PC-9 (cell line): ENCODE measurements at regions of chr1 and their contacts with region 1.

Region 1: GRCh38 chr1:68346188-68346808 is 103.5 kb downstream of the RPE65 start:
- DNase-seq: no peak
- H3K4me3 ChIP-seq: no peak overlapping the region
- H3K27ac ChIP-seq: no peak overlapping the region
- H3K4me1 ChIP-seq: no peaks in the 10 kb centered on the region
- H3K27me3 ChIP-seq: no peaks in the 10 kb centered on the region
- CTCF ChIP-seq: peak; percentile 78

Region 2: DNA sequence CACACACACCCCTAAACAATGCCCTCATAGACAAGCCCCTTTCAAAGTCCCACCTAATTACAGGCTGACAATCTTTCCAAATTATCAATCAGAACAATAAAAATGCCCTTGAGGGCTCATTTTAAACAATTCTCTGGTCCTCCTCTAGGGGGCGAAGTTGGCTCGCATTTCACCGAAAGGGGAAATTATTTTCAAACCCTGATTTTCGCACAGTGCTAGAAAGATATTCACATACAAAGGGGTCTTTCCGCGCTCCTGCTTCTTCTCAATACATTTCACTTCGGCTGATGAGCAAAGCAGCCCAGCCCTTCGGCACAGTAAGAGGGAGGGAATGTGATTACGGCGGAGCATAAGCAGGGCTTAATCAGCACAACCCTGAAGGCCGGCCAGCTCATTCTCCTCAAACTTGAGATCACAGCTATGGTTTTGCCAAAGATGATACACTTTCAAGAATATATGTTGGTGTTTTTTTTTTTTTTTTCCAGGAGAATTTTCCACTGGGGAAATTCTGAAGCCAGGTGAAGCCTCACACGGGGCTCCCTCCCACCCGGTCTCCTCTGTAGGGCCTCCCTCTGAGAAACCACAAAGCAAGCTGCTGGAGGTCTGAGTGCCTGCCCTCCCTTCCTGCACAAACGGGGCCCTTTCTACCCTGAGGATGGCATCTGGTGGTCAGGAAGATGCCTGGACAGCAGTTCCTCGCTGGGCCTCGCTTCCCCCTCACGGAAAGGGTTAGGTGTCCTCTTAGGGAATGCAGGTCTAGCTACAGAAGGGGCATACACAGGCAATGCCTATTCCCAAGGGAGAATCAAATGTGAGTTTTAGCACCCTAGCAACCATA is 579.9 kb before region 1 on chr1:
- CTCF ChIA-PET with region 1: no interaction called
- POLR2A ChIA-PET with region 1: no interaction called
- intact Hi-C with region 1: loop called (anchors 1 kb)
- DNase-seq: peak in 1 of 2 experiments; percentile 44
- H3K4me3 ChIP-seq: no peak overlapping the region
- H3K27ac ChIP-seq: no peak overlapping the region
- H3K4me1 ChIP-seq: no peaks in the 10 kb centered on the region
- H3K27me3 ChIP-seq: no peaks in the 10 kb centered on the region
- CTCF ChIP-seq: peak; percentile 99

Region 3: GRCh38 chr1:68010090-68010489 is 336.2 kb before region 1 on chr1:
- CTCF ChIA-PET with region 1: no interaction called
- POLR2A ChIA-PET with region 1: no interaction called
- intact Hi-C with region 1: loop called (anchors 10 kb)
- DNase-seq: no peak
- H3K4me3 ChIP-seq: no peak overlapping the region
- H3K27ac ChIP-seq: no peak overlapping the region
- H3K4me1 ChIP-seq: no peaks in the 10 kb centered on the region
- H3K27me3 ChIP-seq: peaks cover 6% of the 10 kb centered on the region; the same call in 1 of the 2 replicates
- CTCF ChIP-seq: peak; percentile 60

Region 4: GRCh38 chr1:68232354-68233148 is 113.7 kb before region 1 on chr1 and contains the start of gene WLS:
- CTCF ChIA-PET with region 1: no interaction called
- POLR2A ChIA-PET with region 1: no interaction called
- intact Hi-C with region 1: loop called (anchors 10 kb)
- DNase-seq: peak in 1 of 2 experiments; percentile 59
- H3K4me3 ChIP-seq: peak within 1 kb of the TSS; percentile 61
- H3K27ac ChIP-seq: no peak within 1 kb of the TSS
- H3K4me1 ChIP-seq: peaks cover 6% of the 10 kb centered on the region; the same call in 1 of the 2 replicates
- H3K27me3 ChIP-seq: peaks cover 4% of the 10 kb centered on the region
- CTCF ChIP-seq: no peak; the same call in 1 of the 2 replicates
- total RNA-seq, gene WLS: 19.8 and 30.5 TPM in 2 replicates

Region 5: DNA sequence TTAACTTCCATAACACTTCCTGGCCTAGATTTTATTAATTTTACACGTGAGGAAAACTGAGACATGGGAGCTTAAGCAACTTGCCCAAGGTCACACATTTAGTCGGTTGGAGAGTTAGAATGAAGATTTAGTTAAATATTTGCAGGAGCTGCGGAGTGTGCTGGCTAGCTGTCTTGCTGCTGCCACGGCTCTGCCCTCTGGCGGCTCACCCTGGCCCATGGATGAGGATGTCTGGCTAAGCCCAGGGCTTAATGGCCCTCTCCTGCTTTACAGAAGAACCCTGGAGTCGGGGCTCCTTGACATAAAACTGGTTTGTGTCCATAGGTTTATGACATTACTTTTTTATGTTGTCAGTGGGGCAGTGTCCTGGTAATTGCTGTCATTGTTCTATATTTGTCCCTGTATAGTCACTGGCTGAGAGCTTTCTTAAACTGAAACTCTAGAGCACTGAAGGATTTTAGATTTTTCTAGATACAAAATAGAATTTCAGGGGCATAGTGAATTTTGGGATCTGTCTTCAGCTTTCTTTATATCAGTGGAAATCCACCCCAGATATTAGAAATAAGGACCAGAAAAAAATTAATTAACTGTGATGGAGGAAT is 25.1 kb before region 1 on chr1:
- CTCF ChIA-PET with region 1: no interaction called
- POLR2A ChIA-PET with region 1: no interaction called
- intact Hi-C with region 1: no loop called
- DNase-seq: peak in 1 of 2 experiments; percentile 11
- H3K4me3 ChIP-seq: no peak overlapping the region
- H3K27ac ChIP-seq: no peak overlapping the region
- H3K4me1 ChIP-seq: no peaks in the 10 kb centered on the region
- H3K27me3 ChIP-seq: no peaks in the 10 kb centered on the region
- CTCF ChIP-seq: no peak

Region 6: GRCh38 chr1:68363339-68363738 is 17.0 kb after region 1 on chr1:
- CTCF ChIA-PET with region 1: no interaction called
- POLR2A ChIA-PET with region 1: no interaction called
- intact Hi-C with region 1: no loop called
- DNase-seq: no peak
- H3K4me3 ChIP-seq: no peak overlapping the region
- H3K27ac ChIP-seq: no peak overlapping the region
- H3K4me1 ChIP-seq: 0 out of 2 replicates have a peak, but pooled peaks cover 5% of the 10 kb centered on the region
- H3K27me3 ChIP-seq: no peaks in the 10 kb centered on the region
- CTCF ChIP-seq: no peak

Region 7: DNA sequence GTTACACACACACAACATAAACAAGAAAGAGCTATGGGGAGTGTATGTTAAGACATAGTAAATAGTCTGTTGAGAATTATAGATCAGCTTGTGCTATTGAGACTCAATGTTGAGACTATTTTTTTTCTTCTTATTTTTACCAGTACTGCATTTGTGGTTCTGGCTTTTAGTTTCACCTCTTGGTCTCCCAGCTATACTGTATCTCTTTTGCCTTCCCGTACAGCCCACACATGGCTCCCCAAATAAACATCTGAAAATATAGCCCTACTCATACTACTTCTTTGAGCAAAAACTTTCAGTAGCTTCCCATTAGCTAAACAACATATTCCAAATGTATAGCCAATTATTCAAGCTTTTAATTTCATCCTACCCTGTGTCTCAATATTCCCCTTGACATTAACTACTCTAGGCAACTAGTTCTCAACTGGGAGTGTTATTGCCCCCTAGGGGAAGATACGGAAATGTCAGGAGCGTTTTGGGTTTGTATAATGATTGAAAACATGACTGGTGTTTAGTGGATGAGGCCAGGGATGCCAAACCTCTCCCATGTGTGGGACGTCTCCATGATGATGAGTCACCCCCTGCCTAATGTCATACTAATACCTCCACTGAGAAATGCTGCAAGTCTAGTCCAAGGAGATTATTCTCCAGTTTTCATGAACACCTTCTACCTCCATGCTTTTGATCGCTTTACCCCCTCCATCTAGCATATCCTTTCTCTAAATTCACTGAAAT is 96.7 kb after region 1 on chr1:
- CTCF ChIA-PET with region 1: interaction called, 4 read pairs
- POLR2A ChIA-PET with region 1: no interaction called
- intact Hi-C with region 1: loop called (anchors 5 kb)
- DNase-seq: peak; percentile 25 to 55
- H3K4me3 ChIP-seq: no peak overlapping the region
- H3K27ac ChIP-seq: no peak overlapping the region
- H3K4me1 ChIP-seq: no peaks in the 10 kb centered on the region
- H3K27me3 ChIP-seq: no peaks in the 10 kb centered on the region
- CTCF ChIP-seq: peak; percentile 89